Activated CD4-positive, alpha-beta memory T cell treated with anti-CD3 and anti-CD28 coated beads for 36 hours (primary cell): ENCODE measurements at regions of chr2 and their contacts with region 1.

Region 1: DNA sequence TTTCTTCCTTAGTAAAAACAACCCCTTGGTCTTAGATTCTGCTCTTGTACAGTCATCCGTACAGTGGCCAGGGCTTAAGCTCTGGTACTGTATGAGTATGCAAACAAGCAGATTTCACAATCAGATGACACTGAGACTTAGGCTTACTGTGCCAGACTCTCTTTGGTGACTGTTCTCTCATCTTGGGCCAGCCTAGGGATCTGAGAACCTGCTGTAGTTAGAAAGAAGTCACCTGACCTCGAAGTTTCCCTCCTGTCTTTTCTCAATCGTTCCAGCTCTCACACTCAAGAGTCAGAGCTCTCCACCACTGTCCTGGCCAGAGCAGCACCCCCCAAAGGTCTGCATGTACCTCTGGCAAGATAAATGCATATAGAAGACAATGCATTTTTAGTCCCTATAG is 63.2 kb downstream of the ZEB2 start:
- DNase-seq: peak; percentile 31
- H3K4me3 Mint-ChIP-seq: no peak overlapping the region
- H3K27ac Mint-ChIP-seq: no peak overlapping the region
- H3K4me1 Mint-ChIP-seq: peaks cover 52% of the 10 kb centered on the region
- H3K27me3 Mint-ChIP-seq: peaks cover 13% of the 10 kb centered on the region

Region 2: DNA sequence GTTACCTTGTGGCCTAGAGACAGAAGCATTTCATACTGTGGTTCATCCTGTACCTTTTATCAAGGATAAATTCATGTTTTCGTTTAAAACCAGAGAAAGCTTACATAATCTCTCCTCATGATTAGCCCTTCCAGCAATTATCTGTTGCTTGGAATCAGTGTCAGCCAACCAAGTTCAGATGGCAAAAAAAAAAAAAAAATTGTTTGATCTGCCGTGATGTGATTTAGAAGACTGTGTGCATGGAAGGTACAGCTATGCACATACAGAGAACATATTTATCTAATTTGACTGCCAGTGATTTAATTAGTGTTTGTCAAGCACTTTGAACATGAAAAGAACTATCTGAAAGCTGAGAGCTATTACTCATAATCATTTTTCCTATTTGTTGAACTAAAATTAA is 117.6 kb before region 1 on chr2:
- CTCF ChIA-PET with region 1: no interaction called
- POLR2A ChIA-PET with region 1: no interaction called
- intact Hi-C with region 1: no loop called
- DNase-seq: no peak
- H3K4me3 Mint-ChIP-seq: no peak overlapping the region
- H3K27ac Mint-ChIP-seq: no peak overlapping the region
- H3K4me1 Mint-ChIP-seq: peaks cover 14% of the 10 kb centered on the region
- H3K27me3 Mint-ChIP-seq: no peaks in the 10 kb centered on the region

Region 3: DNA sequence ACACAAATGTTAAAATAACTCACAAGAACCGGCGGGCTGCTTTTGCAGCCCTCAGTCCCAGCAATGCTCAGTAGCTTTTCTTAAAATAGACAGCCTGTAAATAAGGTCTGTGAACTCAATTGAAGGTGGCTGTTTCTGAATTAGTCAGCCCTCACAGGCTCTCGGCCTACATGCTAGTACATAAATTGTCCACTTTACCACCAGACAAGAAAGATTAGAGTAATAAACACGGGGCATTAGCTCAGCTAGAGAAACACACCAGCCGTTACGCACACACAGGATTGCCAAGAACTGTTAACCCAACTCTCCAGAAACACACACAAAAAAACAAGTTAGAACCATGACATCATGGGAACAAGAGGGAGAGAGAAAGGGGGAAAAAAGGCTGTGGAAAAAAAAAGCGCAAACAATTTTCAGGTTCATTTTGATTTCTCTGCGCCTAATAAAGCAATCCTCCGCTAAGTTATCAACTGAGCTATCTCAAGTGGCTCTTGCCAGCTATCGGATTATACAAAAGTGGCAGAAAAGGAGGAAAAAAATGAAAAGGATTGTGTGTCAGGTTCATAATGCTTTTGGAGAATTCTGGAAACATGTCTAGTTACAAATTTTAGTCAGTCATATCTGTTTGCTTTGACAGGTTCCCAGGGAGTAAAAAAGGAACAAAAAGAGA is 25.8 kb before region 1 on chr2:
- CTCF ChIA-PET with region 1: no interaction called
- POLR2A ChIA-PET with region 1: no interaction called
- intact Hi-C with region 1: loop called (anchors 2 kb)
- DNase-seq: peak; percentile 20
- H3K4me3 Mint-ChIP-seq: no peak overlapping the region
- H3K27ac Mint-ChIP-seq: no peak overlapping the region
- H3K4me1 Mint-ChIP-seq: no peaks in the 10 kb centered on the region
- H3K27me3 Mint-ChIP-seq: peaks cover 8% of the 10 kb centered on the region

Region 4: DNA sequence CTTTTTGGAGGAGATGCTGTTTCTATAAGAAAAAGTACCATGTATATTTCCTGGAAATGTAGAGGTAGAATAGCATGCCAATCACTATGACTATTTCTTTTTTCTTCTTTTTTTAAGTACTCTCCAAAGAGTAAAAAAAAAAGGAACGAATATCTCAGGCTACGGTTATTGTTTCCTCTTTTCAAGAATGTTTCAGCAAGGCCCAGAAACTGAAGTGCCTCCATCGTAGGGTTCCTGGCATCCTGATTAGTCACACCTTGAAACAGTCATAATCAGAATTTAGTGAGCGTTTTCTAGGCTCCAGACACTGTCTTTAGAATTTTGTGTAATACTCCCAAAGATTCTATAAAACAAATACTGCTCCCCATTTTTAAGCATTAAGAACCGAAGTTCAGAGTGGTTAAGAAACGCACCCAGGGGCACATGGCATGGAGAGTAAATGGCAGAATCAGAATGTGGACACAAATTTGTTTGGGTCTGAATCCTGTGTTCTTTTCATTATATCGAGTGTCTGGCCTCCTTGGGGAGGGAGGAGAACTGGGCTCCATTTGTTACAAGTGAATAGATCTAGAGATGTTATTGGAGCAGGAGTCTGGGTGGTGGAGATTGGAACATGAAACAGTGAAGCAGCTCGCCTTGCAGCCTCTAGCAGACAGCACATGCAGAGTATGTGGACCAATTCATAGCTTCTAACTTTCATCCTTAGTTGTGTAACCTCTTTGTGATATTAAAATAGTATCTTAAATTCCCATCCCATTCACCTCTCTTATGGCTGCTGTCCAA is 36.5 kb after region 1 on chr2:
- CTCF ChIA-PET with region 1: no interaction called
- POLR2A ChIA-PET with region 1: no interaction called
- intact Hi-C with region 1: loop called (anchors 5 kb)
- DNase-seq: peak; percentile 27
- H3K4me3 Mint-ChIP-seq: no peak overlapping the region
- H3K27ac Mint-ChIP-seq: peak overlapping the region; percentile 55
- H3K4me1 Mint-ChIP-seq: peaks cover 29% of the 10 kb centered on the region
- H3K27me3 Mint-ChIP-seq: peaks cover 3% of the 10 kb centered on the region

Region 5: DNA sequence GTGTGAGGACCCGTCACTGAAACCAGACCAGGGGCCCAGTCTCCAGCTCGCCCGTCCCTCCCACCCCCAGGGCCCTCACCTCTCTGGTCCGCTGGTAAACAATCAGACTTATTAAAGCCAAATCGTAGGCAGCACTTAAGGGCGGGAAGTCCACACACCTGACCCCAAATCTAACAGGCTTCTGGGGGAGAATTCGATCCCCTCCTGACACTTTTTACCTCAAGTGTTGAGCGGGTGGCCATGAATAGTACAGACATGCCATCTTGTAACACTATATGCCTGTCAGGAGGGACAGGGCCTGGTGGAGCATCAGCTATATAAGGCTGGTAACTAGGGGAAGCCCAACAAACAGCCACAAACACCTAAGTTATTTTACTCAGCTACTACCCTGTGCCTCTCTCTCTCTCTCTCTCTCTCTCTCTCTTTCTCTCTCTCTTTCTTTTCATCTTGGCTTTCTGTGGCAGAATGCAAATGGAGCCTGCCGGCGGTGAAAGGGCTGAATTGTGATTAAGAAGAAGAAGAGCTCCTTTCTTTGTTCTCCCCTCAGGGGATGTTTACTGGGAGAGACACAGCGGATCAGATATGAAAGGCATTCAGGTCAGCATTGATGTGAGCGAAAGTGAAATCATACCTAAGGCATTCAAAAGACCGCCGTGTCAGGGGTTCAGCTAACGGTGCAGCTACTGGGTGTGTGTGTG is 53.8 kb after region 1 on chr2:
- CTCF ChIA-PET with region 1: no interaction called
- POLR2A ChIA-PET with region 1: no interaction called
- intact Hi-C with region 1: loop called (anchors 1 kb)
- DNase-seq: peak; percentile 62
- H3K4me3 Mint-ChIP-seq: peak overlapping the region; percentile 54
- H3K27ac Mint-ChIP-seq: peak overlapping the region; percentile 70
- H3K4me1 Mint-ChIP-seq: peaks cover 30% of the 10 kb centered on the region
- H3K27me3 Mint-ChIP-seq: peaks cover 57% of the 10 kb centered on the region